Heart right ventricle (tissue), 16 donors: ENCODE measurements at regions of chr7 and their contacts with region 1.

Region 1: DNA sequence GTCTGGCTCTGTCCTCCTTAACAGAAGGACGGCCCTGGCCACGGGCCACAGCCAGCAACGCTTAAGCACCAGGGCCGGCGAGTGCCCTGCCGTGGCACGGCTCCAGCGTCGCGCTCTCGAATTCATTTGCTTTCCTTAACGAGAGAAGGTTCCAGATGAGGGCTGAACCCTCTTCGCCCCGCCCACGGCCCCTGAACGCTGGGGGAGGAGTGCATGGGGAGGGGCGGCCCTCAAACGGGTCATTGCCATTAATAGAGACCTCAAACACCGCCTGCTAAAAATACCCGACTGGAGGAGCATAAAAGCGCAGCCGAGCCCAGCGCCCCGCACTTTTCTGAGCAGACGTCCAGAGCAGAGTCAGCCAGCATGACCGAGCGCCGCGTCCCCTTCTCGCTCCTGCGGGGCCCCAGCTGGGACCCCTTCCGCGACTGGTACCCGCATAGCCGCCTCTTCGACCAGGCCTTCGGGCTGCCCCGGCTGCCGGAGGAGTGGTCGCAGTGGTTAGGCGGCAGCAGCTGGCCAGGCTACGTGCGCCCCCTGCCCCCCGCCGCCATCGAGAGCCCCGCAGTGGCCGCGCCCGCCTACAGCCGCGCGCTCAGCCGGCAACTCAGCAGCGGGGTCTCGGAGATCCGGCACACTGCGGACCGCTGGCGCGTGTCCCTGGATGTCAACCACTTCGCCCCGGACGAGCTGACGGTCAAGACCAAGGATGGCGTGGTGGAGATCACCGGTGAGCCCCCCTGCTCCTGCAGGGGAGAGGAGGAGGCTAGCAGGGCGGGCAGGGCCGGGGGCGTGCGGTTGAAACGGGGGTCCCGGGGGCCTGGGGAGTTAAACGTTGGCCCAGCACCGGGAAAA is at the start of gene HSPB1:
- DNase-seq: peak; percentile 96 to 97
- ATAC-seq: peak; percentile 78 to 89 (median 85)
- H3K4me3 ChIP-seq: peak within 1 kb of the TSS; percentile 72 to 100 (median 98)
- H3K27ac ChIP-seq: peak within 1 kb of the TSS; percentile 93 to 100 (median 100)
- H3K4me1 ChIP-seq: peaks cover 10 to 48% (median 35%) of the 10 kb centered on the region in 9 donors
- H3K27me3 ChIP-seq: peaks cover 0 to 7% (median 0%) of the 10 kb centered on the region in 7 donors
- CTCF ChIP-seq: peak in 2 of 9 donors; percentile 14 to 24
- total RNA-seq, gene HSPB1: 1,266 to 2,631 (median 2,034) TPM

Region 2: DNA sequence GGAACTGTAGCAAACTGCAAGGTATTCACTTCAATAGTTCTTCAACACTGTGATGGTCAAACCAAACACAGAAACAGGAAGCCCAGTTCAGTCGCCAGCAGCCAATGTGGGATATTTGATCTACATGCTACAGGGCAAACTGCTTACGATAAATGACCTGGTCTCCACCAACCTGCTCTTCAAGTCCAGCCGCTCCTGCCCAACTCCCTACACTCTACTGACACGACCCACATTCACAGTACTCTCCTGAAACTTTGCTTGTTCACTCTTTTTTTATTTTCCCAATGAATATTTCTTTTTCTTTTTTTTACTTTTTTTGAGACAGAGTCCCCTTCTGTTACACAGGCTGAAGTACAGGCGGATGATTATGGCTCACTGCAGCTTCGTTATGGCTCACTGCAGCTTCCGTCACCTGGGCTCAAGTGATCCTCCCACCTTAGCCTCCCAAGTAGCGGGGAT is 212.6 kb before region 1 on chr7:
- intact Hi-C with region 1: no loop called
- DNase-seq: no peak
- ATAC-seq: no peak
- H3K4me3 ChIP-seq: no peak overlapping the region
- H3K27ac ChIP-seq: no peak overlapping the region
- H3K4me1 ChIP-seq: no peaks in the 10 kb centered on the region
- H3K27me3 ChIP-seq: peaks cover 0 to 8% (median 0%) of the 10 kb centered on the region in 7 donors
- CTCF ChIP-seq: no peak

Region 3: DNA sequence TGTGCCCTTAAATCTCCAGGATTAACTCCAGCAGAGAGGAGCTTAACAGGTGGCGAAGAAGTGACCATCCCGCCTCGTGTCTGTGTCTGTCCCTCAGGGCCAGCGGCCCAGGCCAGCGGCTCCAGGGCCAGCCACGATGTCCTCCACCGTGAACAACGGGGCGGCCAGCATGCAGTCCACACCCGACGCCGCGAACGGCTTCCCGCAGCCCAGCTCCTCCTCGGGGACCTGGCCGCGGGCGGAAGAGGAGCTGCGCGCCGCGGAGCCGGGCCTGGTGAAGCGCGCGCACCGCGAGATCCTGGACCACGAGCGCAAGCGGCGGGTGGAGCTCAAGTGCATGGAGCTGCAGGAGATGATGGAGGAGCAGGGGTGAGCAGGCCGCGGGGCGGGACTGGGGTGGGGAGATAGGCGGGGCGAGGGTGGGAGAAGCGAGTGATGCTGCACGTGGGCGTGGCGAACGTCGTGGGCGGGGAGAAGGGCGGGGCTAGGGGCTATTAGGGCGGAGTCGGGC is 67.6 kb before region 1 on chr7:
- intact Hi-C with region 1: no loop called
- DNase-seq: peak; percentile 43 to 68
- ATAC-seq: peak; percentile 42 to 88 (median 62)
- H3K4me3 ChIP-seq: peak overlapping the region in 6 of 10 donors; percentile 12 to 31 (median 24)
- H3K27ac ChIP-seq: no peak overlapping the region
- H3K4me1 ChIP-seq: peaks cover 0 to 6% (median 3%) of the 10 kb centered on the region in 9 donors
- H3K27me3 ChIP-seq: peaks cover 14 to 87% (median 70%) of the 10 kb centered on the region in 7 donors
- CTCF ChIP-seq: no peak

Region 4: GRCh38 chr7:76291343-76292212 is 11.0 kb before region 1 on chr7:
- intact Hi-C with region 1: loop called in 1 of 10 experiments (anchors 1 kb)
- DNase-seq: peak; percentile 89 to 91
- ATAC-seq: peak; percentile 69 to 85 (median 76)
- H3K4me3 ChIP-seq: peak overlapping the region in 9 of 10 donors; percentile 6 to 47 (median 39)
- H3K27ac ChIP-seq: peak overlapping the region; percentile 84 to 98 (median 94)
- H3K4me1 ChIP-seq: peaks cover 21 to 50% (median 44%) of the 10 kb centered on the region in 9 donors
- H3K27me3 ChIP-seq: no peaks in the 10 kb centered on the region
- CTCF ChIP-seq: peak; percentile 95 to 99 (median 97)